ENCODE measurements at regions of chr12 and their contacts with region 1.

Region 1: GRCh38 chr12:6723607-6724396 is at the start of gene COPS7A:
- DNase-seq: peak; percentile 97
- CTCF ChIP-seq: peak; percentile 27

Region 2: GRCh38 chr12:6493497-6494257 is 230.1 kb before region 1 on chr12 and contains the start of gene NCAPD2:
- CTCF ChIA-PET with region 1: no interaction called
- POLR2A ChIA-PET with region 1: interaction called, 11 read pairs
- DNase-seq: peak; percentile 96
- CTCF ChIP-seq: no peak

Region 3: GRCh38 chr12:6688999-6689882 is 34.6 kb before region 1 on chr12 and contains the start of gene ZNF384:
- CTCF ChIA-PET with region 1: interaction called, 9 read pairs
- POLR2A ChIA-PET with region 1: interaction called, 17 read pairs
- DNase-seq: peak; percentile 96
- CTCF ChIP-seq: peak; percentile 2

Region 4: DNA sequence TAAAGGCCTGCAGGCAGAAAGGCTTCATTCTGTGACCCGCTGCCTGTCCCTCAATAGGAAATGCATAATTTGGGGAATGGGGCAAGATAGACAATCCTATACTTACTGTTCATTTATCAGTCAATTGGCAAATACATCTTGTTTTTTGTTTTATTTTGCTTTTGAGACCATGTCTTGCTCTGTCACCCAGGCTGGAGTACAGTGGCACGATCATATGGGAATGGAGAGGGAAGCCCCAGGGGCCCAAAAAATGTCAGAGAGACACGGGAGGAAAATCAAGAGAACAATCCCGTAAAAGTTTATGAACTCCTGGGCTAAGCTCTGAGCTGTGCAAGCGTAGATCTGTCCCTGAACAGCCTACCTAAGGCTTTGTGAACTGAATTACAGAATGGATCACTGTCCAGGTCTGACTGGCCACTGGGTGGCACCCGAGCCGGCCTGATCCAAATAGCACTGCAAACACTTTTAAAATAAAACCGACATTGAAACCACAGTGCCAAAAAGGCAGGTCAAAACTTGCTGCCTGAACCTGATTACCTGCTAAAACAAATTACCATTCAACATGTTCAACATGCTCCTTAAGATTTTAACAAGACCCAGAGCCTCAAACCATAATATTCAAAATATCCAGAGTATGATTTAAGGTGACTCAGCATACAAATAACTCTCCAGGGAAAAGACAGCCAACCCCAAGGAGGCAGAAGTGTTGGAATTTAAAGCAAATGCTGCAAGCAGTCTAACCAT is 11.8 kb after region 1 on chr12:
- CTCF ChIA-PET with region 1: interaction called, 15 read pairs
- POLR2A ChIA-PET with region 1: no interaction called
- DNase-seq: peak; percentile 56
- CTCF ChIP-seq: peak; percentile 81

Region 5: GRCh38 chr12:6764011-6764828 is 40.4 kb after region 1 on chr12:
- CTCF ChIA-PET with region 1: interaction called, 22 read pairs
- POLR2A ChIA-PET with region 1: no interaction called
- DNase-seq: peak; percentile 96
- CTCF ChIP-seq: no peak

Measured in GM10248 (cell line).